Dendritic cell treated with granulocyte-macrophage colony-stimulating factor and Interleukin-4, amounts not matched to agents 40 ng/mL and 50 ng/mL, for 4 days (primary cell): ENCODE measurements at regions of chr2 and their contacts with region 1.

Region 1: DNA sequence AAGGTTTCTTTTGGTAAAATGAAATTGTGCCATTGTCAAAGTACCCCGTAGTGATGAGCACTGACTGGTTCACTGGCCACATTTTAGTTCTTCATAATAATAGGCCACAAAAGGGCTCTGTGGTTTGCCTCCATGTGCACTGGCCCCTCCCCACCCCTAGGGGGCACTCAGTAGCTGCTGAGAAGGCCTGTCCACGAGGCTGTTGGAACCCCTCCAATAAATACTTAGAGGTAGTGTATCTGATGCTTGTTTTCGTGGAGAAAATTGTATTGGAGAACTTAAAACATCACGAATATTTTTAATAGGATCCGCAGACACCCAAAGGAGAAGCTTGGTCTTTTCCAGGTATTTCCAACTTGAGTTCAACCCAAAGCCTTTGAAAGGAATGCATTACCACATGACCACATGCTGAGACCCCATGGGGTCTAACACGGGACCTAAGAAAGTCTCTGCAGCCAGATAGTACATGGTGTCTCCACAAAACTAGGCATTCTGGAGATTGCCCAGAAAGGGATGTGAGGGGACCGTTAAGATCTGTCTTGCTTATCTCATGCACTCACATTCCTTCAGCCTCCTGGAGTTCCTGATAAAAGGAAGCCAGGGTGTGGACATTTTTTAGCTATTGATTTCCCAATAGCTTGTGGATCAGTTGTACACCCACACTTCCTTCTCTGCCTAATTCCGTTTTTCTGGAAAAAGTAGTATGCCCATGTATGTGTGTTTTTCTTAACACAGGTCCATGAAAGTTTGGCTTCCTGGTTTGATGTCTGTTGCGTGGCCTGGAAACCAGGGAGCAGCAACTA is 28.5 kb upstream of the NOSTRIN start:
- H3K4me3 Mint-ChIP-seq: no peak overlapping the region
- H3K27ac Mint-ChIP-seq: no peak overlapping the region
- H3K4me1 Mint-ChIP-seq: no peaks in the 10 kb centered on the region
- H3K27me3 Mint-ChIP-seq: no peaks in the 10 kb centered on the region

Region 2: DNA sequence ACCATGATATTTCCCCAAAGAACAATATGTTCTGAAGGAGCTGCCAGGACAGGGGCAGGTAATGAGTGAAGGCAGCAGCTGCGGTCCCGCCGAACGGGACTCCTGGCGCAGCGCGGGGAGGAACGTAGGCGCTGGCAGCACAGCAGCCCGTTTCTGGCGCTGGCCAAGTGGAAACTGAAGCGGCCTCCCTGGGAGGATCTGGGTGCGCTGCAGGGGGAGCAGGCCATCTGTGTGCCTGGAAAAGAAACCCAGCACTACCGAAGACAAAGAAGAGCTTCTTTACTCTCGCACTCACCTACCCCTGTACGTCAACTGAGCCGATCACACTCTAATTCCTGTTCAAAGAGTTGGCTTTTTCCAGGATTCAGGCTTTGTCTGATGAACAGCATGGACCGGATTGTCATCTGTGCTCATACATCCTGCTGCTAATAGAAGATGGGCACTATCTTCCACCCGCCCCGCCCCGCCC is 139.0 kb after region 1 on chr2:
- intact Hi-C with region 1: loop called (anchors 10 kb)
- H3K4me3 Mint-ChIP-seq: peak overlapping the region; percentile 65
- H3K27ac Mint-ChIP-seq: no peak overlapping the region
- H3K4me1 Mint-ChIP-seq: peaks cover 11% of the 10 kb centered on the region
- H3K27me3 Mint-ChIP-seq: peaks cover 14% of the 10 kb centered on the region